Tibial artery (tissue), 4 donors: ENCODE measurements at regions of chr17 and their contacts with region 1.

Region 1: GRCh38 chr17:39960524-39961041 is 2.2 kb upstream of the GSDMA start:
- DNase-seq: no peak
- H3K4me3 ChIP-seq: no peak overlapping the region
- H3K27ac ChIP-seq: no peak overlapping the region
- H3K4me1 ChIP-seq: peaks cover 0 to 4% (median 1%) of the 10 kb centered on the region in 4 donors
- H3K27me3 ChIP-seq: peaks cover 0 to 31% of the 10 kb centered on the region in 2 donors
- CTCF ChIP-seq: no peak

Region 2: GRCh38 chr17:39979893-39980350 is 19.3 kb after region 1 on chr17:
- intact Hi-C with region 1: loop called (anchors 2 kb)
- DNase-seq: no peak
- H3K4me3 ChIP-seq: peak overlapping the region; percentile 82 to 97
- H3K27ac ChIP-seq: peak overlapping the region; percentile 89 to 90
- H3K4me1 ChIP-seq: peaks cover 0 to 30% (median 25%) of the 10 kb centered on the region in 4 donors
- H3K27me3 ChIP-seq: peaks cover 0 to 26% of the 10 kb centered on the region in 2 donors
- CTCF ChIP-seq: no peak